ENCODE measurements at regions of chr1 and their contacts with region 1.

Region 1: GRCh38 chr1:236489710-236490377 is 33.9 kb upstream of the LGALS8 start:
- DNase-seq: peak; percentile 66
- ATAC-seq: peak; percentile 71
- H3K4me3 ChIP-seq: no peak overlapping the region
- H3K27ac ChIP-seq: no peak overlapping the region
- H3K4me1 ChIP-seq: no peaks in the 10 kb centered on the region
- H3K27me3 ChIP-seq: no peaks in the 10 kb centered on the region
- CTCF ChIP-seq: peak; percentile 60

Region 2: GRCh38 chr1:236108027-236108648 is 381.7 kb before region 1 on chr1:
- CTCF ChIA-PET with region 1: no interaction called
- POLR2A ChIA-PET with region 1: no interaction called
- intact Hi-C with region 1: loop called (anchors 1 kb)
- DNase-seq: no peak
- ATAC-seq: no peak
- H3K4me3 ChIP-seq: no peak overlapping the region
- H3K27ac ChIP-seq: no peak overlapping the region
- H3K4me1 ChIP-seq: no peaks in the 10 kb centered on the region
- H3K27me3 ChIP-seq: no peaks in the 10 kb centered on the region
- CTCF ChIP-seq: no peak